Dendritic cell treated with granulocyte-macrophage colony-stimulating factor and Interleukin-4, amounts not matched to agents 40 ng/mL and 50 ng/mL, for 4 days (primary cell): ENCODE measurements at regions of chr3 and their contacts with region 1.

Region 1: DNA sequence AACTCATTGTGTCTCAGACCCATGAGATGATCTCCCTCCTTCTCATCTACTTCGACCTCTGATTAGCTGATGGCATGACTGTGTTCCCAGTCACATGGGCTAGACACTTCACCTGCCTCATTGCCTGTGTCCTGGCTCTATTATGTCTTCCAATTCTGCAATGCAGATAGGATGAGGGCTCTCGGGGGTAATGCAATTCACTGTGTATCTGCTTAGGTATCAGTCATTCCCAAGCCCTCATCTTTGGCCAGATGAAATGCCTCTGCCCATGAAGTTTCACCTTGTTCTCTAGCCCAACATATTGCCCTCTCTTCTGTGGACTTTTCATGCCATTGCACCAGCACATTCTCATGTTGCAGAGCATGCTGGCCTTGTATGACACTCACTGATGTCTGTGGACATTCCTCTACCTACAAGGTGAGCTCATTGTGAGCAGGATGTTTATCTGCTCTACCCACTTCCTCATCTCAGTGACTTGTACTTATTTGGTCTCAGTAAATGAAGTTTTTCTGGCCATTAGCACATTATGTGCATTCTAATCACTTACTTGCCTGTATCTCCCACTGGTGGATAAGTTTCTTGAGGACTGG is 32.3 kb downstream of the MOBP start:
- H3K4me3 Mint-ChIP-seq: no peak overlapping the region
- H3K27ac Mint-ChIP-seq: no peak overlapping the region
- H3K4me1 Mint-ChIP-seq: no peaks in the 10 kb centered on the region
- H3K27me3 Mint-ChIP-seq: peaks cover 45% of the 10 kb centered on the region

Region 2: DNA sequence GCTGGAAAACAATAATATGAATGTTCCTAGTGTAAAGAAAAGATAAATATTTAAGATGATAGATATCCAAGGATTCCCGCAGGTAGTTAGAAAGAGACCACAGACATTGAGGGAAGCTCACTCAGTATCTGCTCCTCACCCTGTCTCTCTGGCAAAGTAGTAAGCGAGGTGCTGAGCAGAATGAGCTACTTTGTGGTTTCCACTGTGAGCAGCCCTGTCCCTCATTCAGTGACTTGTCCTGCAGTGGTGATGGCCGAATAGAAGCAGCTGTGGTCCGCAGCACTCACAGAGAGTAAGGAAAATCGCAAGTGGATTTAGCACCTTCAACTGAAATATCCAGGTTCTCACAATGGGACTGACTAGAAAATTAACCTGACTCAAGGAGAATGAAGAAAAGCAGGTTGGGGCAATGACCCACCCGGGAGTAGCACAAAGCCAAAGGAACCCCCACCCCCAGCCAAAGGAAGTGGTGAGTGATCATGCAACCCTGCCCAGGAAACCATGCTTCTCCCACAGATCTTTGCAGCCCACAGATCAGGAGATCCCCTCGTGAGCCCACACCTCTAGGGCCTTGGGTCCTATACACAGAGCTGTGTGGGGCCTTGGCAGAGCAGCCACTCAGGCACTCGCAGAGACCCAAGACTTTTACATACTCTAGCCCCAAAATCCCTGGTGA is 138.4 kb before region 1 on chr3:
- intact Hi-C with region 1: no loop called
- H3K4me3 Mint-ChIP-seq: no peak overlapping the region
- H3K27ac Mint-ChIP-seq: no peak overlapping the region
- H3K4me1 Mint-ChIP-seq: peaks cover 10% of the 10 kb centered on the region
- H3K27me3 Mint-ChIP-seq: no peaks in the 10 kb centered on the region

Region 3: GRCh38 chr3:39415983-39416382 is 83.8 kb before region 1 on chr3:
- intact Hi-C with region 1: loop called (anchors 2 kb)
- H3K4me3 Mint-ChIP-seq: no peak overlapping the region
- H3K27ac Mint-ChIP-seq: no peak overlapping the region
- H3K4me1 Mint-ChIP-seq: peaks cover 14% of the 10 kb centered on the region
- H3K27me3 Mint-ChIP-seq: peaks cover 17% of the 10 kb centered on the region

Region 4: GRCh38 chr3:39447637-39448483 is 51.9 kb before region 1 on chr3:
- intact Hi-C with region 1: loop called (anchors 2 kb)
- H3K4me3 Mint-ChIP-seq: no peak overlapping the region
- H3K27ac Mint-ChIP-seq: no peak overlapping the region
- H3K4me1 Mint-ChIP-seq: no peaks in the 10 kb centered on the region
- H3K27me3 Mint-ChIP-seq: peaks cover 6% of the 10 kb centered on the region

Region 5: DNA sequence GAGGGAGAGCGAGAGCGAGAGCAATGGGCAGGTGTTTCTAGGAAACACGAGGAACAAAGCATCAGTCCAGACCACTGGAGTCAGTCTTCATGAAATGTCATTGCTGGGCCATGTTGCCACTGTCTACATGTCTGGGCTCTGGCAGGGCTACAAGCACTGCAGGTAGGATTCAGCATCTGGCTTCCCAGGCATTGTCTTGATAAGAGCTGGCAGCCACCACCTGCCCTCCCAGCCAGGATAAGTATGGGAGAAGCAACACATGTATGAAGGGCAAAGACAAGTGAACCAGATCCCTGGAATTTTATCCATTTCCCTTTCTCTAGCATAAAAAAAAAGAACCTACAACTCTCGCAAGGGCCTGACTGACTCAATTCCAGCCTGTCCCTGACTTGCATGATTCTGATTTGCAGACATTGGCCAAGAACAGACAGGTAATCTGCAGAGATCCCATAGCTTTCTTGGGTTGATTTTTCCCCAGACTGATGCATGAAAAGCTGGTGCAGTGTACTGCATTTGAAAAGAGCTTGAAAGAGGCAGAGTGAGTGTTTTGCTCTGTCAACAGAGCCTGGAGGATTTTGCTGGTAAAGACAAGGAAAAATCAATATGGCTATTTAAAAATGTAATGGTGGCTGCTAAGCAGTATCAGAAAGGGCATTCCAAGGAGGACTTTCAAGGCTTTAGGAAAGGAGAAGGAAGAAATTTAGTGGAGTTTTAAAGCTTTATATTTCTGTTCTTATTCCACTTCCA is 152.4 kb after region 1 on chr3:
- intact Hi-C with region 1: no loop called
- H3K4me3 Mint-ChIP-seq: no peak overlapping the region
- H3K27ac Mint-ChIP-seq: no peak overlapping the region
- H3K4me1 Mint-ChIP-seq: no peaks in the 10 kb centered on the region
- H3K27me3 Mint-ChIP-seq: no peaks in the 10 kb centered on the region